Activated T-helper 1 cell treated with anti-CD3 and anti-CD28 coated beads, Interleukin-12 subunit alpha, Interleukin-12 subunit beta, Interleukin-2, Interleukin-4 antibody, amounts not matched to agents 30 ng/mL and 10 ng/mL and 1 ng/mL, durations not matched to agents 14 hours and 24 hours and 36 hours (primary cell): ENCODE measurements at regions of chr10 and their contacts with region 1.

Region 1: DNA sequence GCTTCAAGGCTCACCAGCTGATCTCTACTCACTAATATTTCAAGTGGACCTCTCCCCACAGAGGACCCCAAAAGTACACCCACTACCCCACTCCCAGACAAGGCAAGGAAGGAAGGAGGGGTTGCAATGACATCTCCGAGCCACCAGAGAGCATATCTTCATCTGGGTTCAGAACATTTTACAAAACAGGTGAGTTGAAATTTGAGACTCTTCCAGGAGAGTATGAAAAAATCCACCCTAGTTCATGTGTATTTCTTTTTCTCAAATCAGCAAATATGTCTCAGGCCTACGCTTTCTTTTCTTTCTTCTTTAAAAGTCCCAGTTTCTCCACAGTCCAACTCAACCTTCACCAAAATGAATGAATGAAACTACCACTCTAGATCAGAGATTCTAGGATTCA is 61.9 kb downstream of the SGMS1 start:
- DNase-seq: no peak
- H3K4me3 Mint-ChIP-seq: no peak overlapping the region
- H3K27ac Mint-ChIP-seq: no peak overlapping the region
- H3K4me1 Mint-ChIP-seq: no peaks in the 10 kb centered on the region
- H3K27me3 Mint-ChIP-seq: no peaks in the 10 kb centered on the region

Region 2: GRCh38 chr10:50653142-50653541 is 91.3 kb after region 1 on chr10:
- intact Hi-C with region 1: loop called (anchors 2 kb)
- DNase-seq: no peak
- H3K4me3 Mint-ChIP-seq: no peak overlapping the region
- H3K27ac Mint-ChIP-seq: no peak overlapping the region
- H3K4me1 Mint-ChIP-seq: peaks cover 22% of the 10 kb centered on the region
- H3K27me3 Mint-ChIP-seq: peaks cover 8% of the 10 kb centered on the region

Region 3: GRCh38 chr10:51585742-51586141 is 1023.9 kb after region 1 on chr10:
- intact Hi-C with region 1: no loop called
- DNase-seq: no peak
- H3K4me3 Mint-ChIP-seq: no peak overlapping the region
- H3K27ac Mint-ChIP-seq: no peak overlapping the region
- H3K4me1 Mint-ChIP-seq: no peaks in the 10 kb centered on the region
- H3K27me3 Mint-ChIP-seq: no peaks in the 10 kb centered on the region